ENCODE measurements at regions of chr22 and their contacts with region 1.

Region 1: GRCh38 chr22:37049224-37049623 is 2.3 kb upstream of the KCTD17 start:
- DNase-seq: no peak
- H3K4me3 Mint-ChIP-seq: no peak overlapping the region
- H3K27ac Mint-ChIP-seq: no peak overlapping the region
- H3K4me1 Mint-ChIP-seq: peaks cover 9% of the 10 kb centered on the region
- H3K27me3 Mint-ChIP-seq: no peaks in the 10 kb centered on the region
- CTCF ChIP-seq: no peak

Region 2: GRCh38 chr22:37346505-37346895 is 297.3 kb after region 1 on chr22:
- CTCF ChIA-PET with region 1: interaction called, 14 read pairs
- intact Hi-C with region 1: no loop called
- DNase-seq: no peak
- H3K4me3 Mint-ChIP-seq: no peak overlapping the region
- H3K27ac Mint-ChIP-seq: no peak overlapping the region
- H3K4me1 Mint-ChIP-seq: no peaks in the 10 kb centered on the region
- H3K27me3 Mint-ChIP-seq: peaks cover 16% of the 10 kb centered on the region
- CTCF ChIP-seq: no peak

Measured in Calu3 (cell line).